Natural killer cell (primary cell): ENCODE measurements at regions of chr11 and their contacts with region 1.

Region 1: GRCh38 chr11:33970984-33971466 is 79.1 kb upstream of the LMO2 start:
- DNase-seq: peak in 1 of 2 donors; percentile 47
- ATAC-seq: peak in 1 of 3 donors; percentile 43
- H3K4me3 ChIP-seq: no peak overlapping the region
- H3K4me3 Mint-ChIP-seq: no peak overlapping the region
- H3K27ac ChIP-seq: no peak overlapping the region
- H3K27ac Mint-ChIP-seq: no peak overlapping the region
- H3K4me1 ChIP-seq: no peaks in the 10 kb centered on the region
- H3K4me1 Mint-ChIP-seq: no peaks in the 10 kb centered on the region
- H3K27me3 ChIP-seq: peaks cover 2% of the 10 kb centered on the region
- H3K27me3 Mint-ChIP-seq: peaks cover 7 to 8% of the 10 kb centered on the region in 2 donors
- CTCF ChIP-seq: no peak

Region 2: DNA sequence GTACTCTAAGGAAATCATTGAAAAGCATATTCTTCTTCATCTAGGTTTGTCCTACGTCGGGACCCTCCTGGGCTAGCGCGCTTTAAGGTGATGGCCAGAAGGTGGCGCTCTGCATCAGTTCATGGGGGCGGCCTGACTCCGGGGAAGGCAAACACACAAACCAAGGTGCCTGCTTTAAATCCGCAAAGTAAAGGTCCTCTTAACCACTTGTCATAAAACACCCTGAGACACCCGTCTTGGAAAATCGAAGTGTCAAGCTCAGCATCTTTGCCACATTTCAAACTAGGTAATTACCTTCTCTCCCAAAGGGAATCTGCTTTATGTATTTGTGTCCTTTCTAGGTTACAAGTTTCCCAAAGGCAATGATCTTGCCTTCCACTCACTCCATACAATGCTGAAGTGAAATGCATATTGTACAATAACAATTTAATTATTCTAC is 113.1 kb before region 1 on chr11:
- intact Hi-C with region 1: loop called (anchors 1 kb)
- DNase-seq: peak; percentile 65 to 84
- ATAC-seq: peak; percentile 86 to 96 (median 87)
- H3K4me3 ChIP-seq: no peak overlapping the region
- H3K4me3 Mint-ChIP-seq: no peak overlapping the region
- H3K27ac ChIP-seq: no peak overlapping the region
- H3K27ac Mint-ChIP-seq: no peak overlapping the region
- H3K4me1 ChIP-seq: no peaks in the 10 kb centered on the region
- H3K4me1 Mint-ChIP-seq: peaks cover 5 to 6% of the 10 kb centered on the region in 2 donors
- H3K27me3 ChIP-seq: peaks cover 2% of the 10 kb centered on the region
- H3K27me3 Mint-ChIP-seq: peaks cover 50 to 76% of the 10 kb centered on the region in 2 donors
- CTCF ChIP-seq: peak; percentile 87